ENCODE measurements at regions of chr10 and their contacts with region 1.

Region 1: DNA sequence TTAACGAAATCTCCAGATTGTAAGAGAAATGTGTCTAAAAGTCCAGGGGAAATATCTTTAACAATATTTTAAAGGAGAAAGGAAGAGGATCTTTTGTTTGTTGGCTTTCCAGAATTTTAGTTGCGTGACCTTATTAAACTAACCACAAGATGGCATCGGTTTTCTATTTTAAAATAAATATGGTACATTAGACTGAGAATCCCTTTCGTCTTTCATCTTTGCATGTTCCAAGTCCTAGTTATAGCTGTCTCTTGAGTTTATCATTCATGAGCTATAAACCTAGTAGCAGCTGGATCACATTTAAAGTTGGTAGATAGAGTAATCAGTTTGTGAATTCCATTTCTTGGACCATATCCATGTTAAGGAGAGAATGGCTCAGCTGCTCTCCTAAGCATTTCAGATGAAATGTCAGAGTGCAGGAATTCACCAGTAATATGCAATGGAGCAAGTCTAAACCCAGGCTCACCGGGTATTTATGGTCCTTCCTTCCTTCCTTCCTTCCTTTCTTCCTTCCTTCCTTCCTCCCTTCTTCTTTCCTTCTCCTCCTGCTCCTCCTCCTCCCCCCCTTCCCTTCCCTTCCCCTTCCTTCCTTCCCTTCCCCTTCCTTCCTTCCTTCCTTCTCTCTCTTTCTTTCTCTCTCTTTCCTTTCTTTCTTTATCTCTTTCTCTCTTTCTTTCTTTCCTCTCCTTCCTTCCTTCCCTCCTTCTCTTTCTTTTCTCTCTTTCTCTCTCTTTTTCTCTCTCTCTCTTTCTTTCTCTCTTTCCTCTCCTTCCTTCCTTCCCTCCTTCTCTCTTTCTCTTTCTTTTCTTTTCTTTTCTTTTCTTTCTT is 57.8 kb upstream of the RAB18 start:
- DNase-seq: no peak
- ATAC-seq: peak in 1 of 2 donors; percentile 33
- H3K4me3 ChIP-seq: no peak overlapping the region
- H3K27ac ChIP-seq: no peak overlapping the region
- H3K4me1 ChIP-seq: no peaks in the 10 kb centered on the region
- H3K27me3 ChIP-seq: no peaks in the 10 kb centered on the region

Region 2: DNA sequence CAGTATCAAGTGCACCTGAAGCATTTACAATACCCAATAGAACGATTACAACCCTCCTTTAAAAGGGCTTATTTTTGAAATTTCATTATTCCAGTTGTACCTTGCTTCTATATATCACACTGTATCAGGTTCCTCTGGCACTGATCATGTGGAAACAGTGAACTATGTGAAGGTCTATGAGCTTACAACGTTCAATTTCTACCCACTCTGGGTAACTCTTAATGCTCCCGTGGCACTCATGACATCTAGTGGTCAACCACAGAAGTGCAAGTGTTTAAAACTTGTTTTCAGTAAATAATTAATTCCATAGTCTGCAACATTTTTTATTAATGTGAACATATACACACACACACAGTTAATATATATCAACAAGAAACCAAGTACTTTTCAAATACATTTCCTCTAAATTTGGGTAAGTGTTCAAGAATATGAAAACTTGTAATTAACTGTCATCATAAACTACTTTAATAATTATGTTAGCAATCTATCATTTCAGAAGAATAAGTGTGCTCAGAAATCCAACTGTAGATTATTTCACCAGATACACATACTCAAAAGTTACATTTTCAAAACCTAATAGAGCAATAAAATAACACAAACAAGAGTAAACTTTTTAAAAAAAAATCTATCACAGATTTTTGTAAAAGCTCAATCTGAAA is 795.6 kb after region 1 on chr10:
- intact Hi-C with region 1: loop called in 1 of 4 experiments (anchors 10 kb)
- DNase-seq: no peak
- ATAC-seq: peak; percentile 72 to 75
- H3K4me3 ChIP-seq: no peak overlapping the region
- H3K27ac ChIP-seq: no peak overlapping the region
- H3K4me1 ChIP-seq: no peaks in the 10 kb centered on the region
- H3K27me3 ChIP-seq: no peaks in the 10 kb centered on the region

Measured in right cardiac atrium (tissue), 5 donors.